ENCODE measurements at regions of chr16 and their contacts with region 1.

Region 1: DNA sequence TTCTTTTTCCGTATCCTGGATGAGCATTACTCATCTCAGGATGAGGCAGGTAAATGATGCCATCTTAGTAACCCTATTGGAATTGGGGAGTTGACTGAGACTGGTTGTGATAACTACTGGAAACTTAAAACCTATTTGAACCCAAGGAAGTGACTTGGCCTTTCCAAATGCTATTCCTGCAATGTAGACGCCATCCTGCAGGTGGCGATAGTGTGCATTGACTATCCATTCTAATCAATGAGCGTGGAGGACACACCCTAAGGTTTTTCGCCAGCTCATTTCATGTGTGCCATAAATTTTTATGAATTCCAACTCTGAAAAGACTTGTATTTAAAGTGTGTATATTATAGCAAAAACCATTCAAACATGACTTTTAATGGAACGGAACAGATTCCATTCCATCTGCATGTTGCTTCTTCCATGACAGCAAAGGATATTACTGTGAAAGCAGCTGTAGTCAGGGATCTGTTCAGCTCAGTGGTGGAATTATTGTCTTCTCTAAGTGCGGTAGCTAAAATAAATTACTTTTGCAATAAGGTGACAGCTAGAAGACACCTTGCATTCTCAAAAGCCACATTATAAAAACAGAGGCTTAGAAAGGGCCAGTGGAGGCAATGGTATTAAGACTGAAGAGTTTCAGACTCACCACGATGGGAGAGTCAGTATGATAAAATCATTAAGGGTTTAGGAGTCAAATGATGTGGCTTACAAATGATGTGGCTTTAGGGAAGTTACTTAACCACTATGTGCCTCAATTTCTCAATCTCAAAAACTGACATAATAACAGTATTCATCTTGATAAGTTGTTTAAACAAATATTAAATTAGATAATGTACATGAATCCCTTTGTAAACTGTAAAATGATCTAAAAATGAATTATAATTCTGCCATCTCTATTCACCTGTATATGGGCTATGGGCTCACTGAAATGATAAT is 55.5 kb downstream of the SYT17 start:
- ATAC-seq: peak in 1 of 8 experiments; percentile 22
- H3K4me3 ChIP-seq: no peak overlapping the region
- H3K27ac ChIP-seq: no peak overlapping the region
- H3K4me1 ChIP-seq: no peaks in the 10 kb centered on the region

Region 2: GRCh38 chr16:19014461-19014860 is 209.0 kb before region 1 on chr16:
- in situ Hi-C with region 1: no loop called
- ATAC-seq: no peak
- H3K4me3 ChIP-seq: no peak overlapping the region
- H3K27ac ChIP-seq: no peak overlapping the region
- H3K4me1 ChIP-seq: no peaks in the 10 kb centered on the region

Region 3: DNA sequence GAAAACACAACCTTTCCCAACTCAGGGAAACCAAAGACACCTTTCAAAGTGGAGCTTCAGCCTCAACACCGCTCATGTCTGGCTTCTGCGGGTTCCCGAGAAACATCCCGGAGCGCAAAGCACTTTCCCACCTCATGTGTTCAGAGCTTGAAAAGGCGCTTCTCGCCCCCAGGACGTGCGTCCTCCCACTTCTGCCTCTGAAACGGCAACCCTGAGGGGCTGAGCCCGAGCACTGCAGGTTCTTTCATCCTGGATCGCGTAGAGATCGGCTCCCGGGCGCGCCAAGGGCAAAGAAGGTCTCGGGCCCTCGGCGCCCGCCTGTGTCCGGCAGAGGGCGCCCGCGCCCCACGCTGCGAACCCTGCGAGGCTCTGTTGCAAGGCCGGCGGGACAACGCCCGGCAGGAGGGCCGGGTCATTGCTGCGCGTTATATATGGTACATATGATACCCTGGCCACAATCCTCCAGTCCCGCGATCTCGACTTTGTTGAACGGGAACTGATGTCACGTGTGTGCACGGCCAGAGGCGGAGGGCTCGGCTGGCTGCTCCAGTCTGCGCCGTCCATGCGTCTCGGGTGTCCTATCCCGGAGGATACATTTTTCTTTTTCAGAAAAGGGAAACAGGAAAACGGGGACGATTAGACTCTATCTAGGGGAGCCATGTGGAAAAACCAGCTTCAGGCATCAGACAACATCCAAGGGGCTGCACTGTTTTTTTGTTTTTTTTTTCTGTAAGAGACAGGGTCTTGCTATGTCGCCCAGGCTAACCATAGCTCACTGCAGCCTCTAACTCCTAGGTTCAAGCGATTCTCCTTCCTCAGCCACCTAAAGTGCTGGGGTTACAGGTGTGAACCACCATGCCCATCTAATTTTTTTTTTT is 136.9 kb before region 1 on chr16:
- in situ Hi-C with region 1: no loop called
- ATAC-seq: peak; percentile 98 to 100 (median 100)
- H3K4me3 ChIP-seq: peak overlapping the region; percentile 2 to 34 (median 18)
- H3K27ac ChIP-seq: no peak overlapping the region
- H3K4me1 ChIP-seq: no peaks in the 10 kb centered on the region

Region 4: GRCh38 chr16:19366391-19366790 is 142.9 kb after region 1 on chr16:
- in situ Hi-C with region 1: loop called in 1 of 9 experiments (anchors 25 kb)
- ATAC-seq: peak in 3 of 8 experiments; percentile 43 to 69 (median 52)
- H3K4me3 ChIP-seq: no peak overlapping the region
- H3K27ac ChIP-seq: no peak overlapping the region
- H3K4me1 ChIP-seq: no peaks in the 10 kb centered on the region

Region 5: DNA sequence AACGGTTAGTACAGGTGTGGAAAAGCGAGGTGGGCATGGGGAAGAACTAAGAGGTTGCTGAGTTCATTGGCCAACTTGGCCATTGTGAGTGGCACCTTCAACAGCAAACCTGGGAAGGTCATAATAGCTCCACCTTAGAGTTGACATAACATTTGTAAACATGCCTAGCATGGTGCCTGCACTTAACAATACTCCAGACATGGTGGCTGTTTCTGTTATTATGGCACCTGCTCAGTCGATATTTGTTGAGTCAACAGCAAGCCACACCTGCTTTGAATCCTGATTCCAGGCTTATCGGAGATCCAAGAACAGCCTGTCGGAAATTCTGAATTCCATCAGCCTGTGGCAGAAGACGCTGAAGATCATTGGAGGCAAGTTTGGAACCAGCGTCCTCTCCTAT is 240.0 kb after region 1 on chr16:
- in situ Hi-C with region 1: no loop called
- ATAC-seq: no peak
- H3K4me3 ChIP-seq: no peak overlapping the region
- H3K27ac ChIP-seq: no peak overlapping the region
- H3K4me1 ChIP-seq: no peaks in the 10 kb centered on the region